A673 (cell line): ENCODE measurements at regions of chr12 and their contacts with region 1.

Region 1: DNA sequence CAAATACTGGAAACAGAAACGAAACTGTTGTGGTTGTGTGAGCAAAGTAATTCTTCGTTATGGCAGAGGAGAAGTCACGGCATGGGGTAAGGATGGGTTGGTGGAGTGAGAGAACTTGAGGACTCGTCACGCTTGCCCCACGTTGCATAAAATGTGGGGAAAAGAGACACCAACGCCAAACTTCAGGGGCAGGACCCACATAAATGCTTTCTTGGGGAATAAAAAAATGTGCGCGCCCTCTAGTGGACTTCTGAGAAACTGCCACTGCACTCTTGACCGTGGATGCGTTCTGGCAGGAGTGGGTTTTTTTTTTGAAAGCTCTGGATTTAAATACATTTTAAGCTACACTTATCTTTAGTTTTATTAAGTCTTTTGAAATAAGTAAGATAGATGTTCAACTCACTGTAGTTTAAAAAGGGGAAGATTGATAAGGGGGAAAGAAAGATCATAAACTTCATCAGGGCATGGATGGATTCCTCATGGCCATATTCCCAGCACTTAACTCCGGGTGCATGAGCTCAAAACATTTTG is 4.1 kb upstream of the IGF1 start:
- DNase-seq: peak; percentile 73
- H3K4me3 ChIP-seq: no peak overlapping the region
- H3K27ac ChIP-seq: no peak overlapping the region
- H3K4me1 ChIP-seq: peaks cover 22% of the 10 kb centered on the region
- H3K27me3 ChIP-seq: no peaks in the 10 kb centered on the region
- CTCF ChIP-seq: peak; percentile 91

Region 2: GRCh38 chr12:101919447-101919846 is 565.0 kb before region 1 on chr12:
- CTCF ChIA-PET with region 1: no interaction called
- POLR2A ChIA-PET with region 1: no interaction called
- intact Hi-C with region 1: loop called (anchors 5 kb)
- DNase-seq: no peak
- H3K4me3 ChIP-seq: no peak overlapping the region
- H3K27ac ChIP-seq: no peak overlapping the region
- H3K4me1 ChIP-seq: no peaks in the 10 kb centered on the region
- H3K27me3 ChIP-seq: no peaks in the 10 kb centered on the region
- CTCF ChIP-seq: no peak

Region 3: DNA sequence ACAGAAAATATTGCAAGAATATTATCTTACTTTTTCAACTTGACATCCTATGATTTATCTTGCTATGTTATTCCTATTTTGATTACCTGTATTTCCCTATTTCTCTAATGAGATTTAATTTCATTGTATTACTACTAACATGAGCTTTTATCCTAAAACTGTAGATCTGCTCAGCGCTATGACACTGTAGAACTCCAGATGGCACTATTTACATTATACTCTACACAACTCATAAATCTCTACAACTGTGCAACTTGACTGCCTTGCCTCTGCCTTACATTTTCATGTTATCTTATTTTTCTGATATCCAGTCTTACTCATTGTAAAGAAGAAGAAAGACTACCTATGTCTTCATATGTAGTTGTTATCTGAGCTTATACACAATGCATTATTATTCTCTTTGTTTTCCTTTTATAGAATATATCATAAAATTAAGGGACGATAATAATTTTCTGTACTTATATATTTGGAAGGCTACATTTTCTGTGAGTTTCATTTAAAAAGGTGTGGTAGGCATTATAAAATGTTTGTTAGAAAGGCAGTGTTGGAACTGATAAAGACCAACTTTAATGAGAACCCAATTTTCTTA is 388.7 kb before region 1 on chr12:
- CTCF ChIA-PET with region 1: no interaction called
- POLR2A ChIA-PET with region 1: no interaction called
- intact Hi-C with region 1: loop called (anchors 10 kb)
- DNase-seq: peak; percentile 41
- H3K4me3 ChIP-seq: no peak overlapping the region
- H3K27ac ChIP-seq: no peak overlapping the region
- H3K4me1 ChIP-seq: no peaks in the 10 kb centered on the region
- H3K27me3 ChIP-seq: no peaks in the 10 kb centered on the region
- CTCF ChIP-seq: peak; percentile 67

Region 4: DNA sequence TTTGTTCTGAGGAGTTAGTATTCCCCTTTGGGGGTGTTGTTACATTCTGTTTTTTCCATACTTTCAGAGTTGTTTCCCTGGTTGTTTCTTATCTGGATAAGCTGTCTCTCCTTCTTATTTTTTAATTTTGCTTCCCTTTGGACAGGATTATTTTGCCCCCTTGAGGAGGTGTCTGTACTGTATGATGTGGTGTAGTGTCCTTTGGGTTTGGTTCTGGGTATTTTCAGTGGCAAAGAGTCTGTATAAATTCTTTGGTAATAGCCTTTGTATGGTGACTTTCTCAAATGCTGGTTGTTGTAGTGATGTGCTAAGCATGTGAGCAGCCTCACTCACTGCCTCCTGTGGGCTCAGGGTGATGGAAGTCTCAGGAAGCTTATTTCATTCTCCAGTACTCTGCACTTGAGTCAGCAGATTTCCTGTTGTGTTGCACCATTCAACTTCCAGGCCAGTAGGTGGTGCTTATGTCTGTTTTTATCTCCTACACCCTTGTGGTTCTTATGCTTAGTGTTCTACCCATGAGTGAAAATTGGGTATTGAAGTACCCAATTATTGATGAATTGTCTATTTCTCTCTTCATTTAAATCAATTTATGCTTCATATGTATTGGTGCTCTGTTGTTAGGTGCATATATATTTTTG is 183.6 kb before region 1 on chr12:
- CTCF ChIA-PET with region 1: no interaction called
- POLR2A ChIA-PET with region 1: no interaction called
- intact Hi-C with region 1: loop called (anchors 2 kb)
- DNase-seq: peak; percentile 66
- H3K4me3 ChIP-seq: no peak overlapping the region
- H3K27ac ChIP-seq: no peak overlapping the region
- H3K4me1 ChIP-seq: no peaks in the 10 kb centered on the region
- H3K27me3 ChIP-seq: peaks cover 6% of the 10 kb centered on the region
- CTCF ChIP-seq: peak; percentile 59

Region 5: GRCh38 chr12:102769319-102769916 is 284.9 kb after region 1 on chr12:
- CTCF ChIA-PET with region 1: no interaction called
- POLR2A ChIA-PET with region 1: no interaction called
- intact Hi-C with region 1: loop called (anchors 5 kb)
- DNase-seq: peak; percentile 87
- H3K4me3 ChIP-seq: no peak overlapping the region
- H3K27ac ChIP-seq: no peak overlapping the region
- H3K4me1 ChIP-seq: peaks cover 27% of the 10 kb centered on the region
- H3K27me3 ChIP-seq: no peaks in the 10 kb centered on the region
- CTCF ChIP-seq: peak; percentile 81